Dorsolateral prefrontal cortex (tissue), 120 donors: ENCODE measurements at regions of chr6 and their contacts with region 1.

Region 1: DNA sequence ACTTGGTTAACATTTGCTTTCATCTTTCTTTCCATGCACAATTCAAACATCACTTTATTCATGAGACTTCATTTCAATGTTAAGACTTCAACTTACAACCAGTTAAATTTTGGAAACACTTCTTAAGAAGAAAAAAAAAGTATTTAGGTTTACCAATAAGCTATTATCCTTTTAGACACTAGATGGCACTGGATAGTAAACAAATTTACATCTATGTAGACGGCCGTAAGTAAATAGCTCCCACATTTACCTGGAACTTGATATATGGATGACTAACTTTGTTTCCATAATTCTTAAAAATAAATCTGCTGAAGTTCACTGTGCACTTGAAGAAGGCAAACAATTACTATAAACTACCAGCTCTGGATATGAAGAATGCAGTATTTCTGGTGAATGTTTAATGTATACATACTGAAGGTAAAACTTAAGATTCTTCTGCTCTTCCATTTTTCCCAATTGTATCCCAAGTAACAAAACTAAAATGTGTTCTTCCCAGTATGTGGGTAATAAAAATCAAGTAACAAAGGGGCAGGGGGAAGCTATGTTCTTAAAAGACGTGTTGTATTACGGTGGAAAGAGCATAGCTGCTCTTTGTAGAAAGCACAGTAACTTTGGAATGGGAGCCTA is 130.6 kb upstream of the C6orf118 start:
- DNase-seq: no peak
- H3K4me3 ChIP-seq: no peak overlapping the region
- H3K27ac ChIP-seq: no peak overlapping the region
- H3K27me3 ChIP-seq: no peaks in the 10 kb centered on the region
- CTCF ChIP-seq: peak; percentile 50 to 88 (median 70)

Region 2: GRCh38 chr6:165668951-165669350 is 228.9 kb after region 1 on chr6:
- intact Hi-C with region 1: no loop called
- DNase-seq: no peak
- H3K4me3 ChIP-seq: no peak overlapping the region
- H3K27ac ChIP-seq: no peak overlapping the region
- H3K27me3 ChIP-seq: peaks cover 0 to 59% (median 18%) of the 10 kb centered on the region in 45 donors
- CTCF ChIP-seq: no peak

Region 3: DNA sequence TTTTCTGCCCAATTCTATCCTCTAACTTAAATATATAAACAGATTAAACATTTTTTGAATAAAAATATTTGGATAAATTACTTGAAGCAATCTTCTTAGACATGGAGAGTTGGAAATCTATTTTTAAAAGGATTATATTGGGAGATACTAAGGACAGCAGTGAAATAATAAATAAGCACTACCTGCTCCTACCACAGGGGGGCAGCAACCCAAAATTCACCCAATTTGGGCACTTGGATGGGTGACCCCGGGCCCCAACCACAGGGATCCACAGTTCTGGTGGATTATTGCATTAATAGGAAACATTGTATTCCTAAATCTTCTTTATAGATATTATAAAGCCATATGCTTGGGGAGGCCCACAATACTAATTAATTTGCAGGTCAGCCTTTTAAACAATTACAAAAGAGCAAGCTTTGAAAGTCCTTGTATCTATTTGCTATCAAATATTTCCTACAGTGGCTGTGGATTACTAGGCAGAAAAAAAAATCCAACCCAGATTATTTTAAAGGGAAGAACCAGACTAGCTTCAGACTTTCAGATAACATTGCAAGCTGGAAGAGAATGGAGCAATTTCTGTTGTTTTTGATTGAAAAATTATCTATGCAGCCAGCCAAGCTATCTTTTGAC is 289.4 kb after region 1 on chr6:
- intact Hi-C with region 1: no loop called
- DNase-seq: no peak
- H3K4me3 ChIP-seq: no peak overlapping the region
- H3K27ac ChIP-seq: no peak overlapping the region
- H3K27me3 ChIP-seq: peaks cover 0 to 3% (median 0%) of the 10 kb centered on the region in 45 donors
- CTCF ChIP-seq: peak; percentile 53 to 85 (median 74)

Region 4: DNA sequence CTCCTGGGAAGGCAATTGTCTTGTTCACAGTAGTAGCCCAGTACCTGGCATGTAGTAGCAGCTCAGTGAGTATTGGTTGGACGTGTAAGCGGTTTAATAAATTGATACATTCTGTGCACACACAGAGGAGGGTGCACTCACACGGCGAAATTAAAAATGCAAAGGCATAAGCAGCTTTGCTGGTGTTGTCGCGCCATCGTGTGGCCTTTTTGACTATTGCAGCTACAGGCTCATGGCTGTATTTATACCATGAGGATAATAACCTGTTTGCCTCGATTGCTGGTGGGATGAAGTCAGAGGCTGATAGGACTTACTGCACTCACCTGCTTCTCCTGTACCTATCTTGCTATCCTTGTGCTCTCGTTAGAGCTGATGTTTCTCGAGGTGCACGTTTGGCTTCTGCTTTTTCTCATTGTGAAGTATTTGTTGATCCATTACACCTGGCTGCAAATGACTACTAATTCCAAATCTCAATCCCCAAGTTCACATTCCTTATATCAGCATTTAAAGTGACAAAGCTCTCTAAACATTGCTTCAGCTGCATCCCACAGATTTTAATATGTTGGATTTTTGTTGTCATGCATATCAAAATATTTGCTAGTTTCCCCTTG is 666.1 kb after region 1 on chr6:
- intact Hi-C with region 1: loop called in 1 of 2 experiments (anchors 10 kb)
- DNase-seq: peak; percentile 70 to 92 (median 80)
- H3K4me3 ChIP-seq: no peak overlapping the region
- H3K27ac ChIP-seq: no peak overlapping the region
- H3K27me3 ChIP-seq: peaks cover 0 to 5% (median 0%) of the 10 kb centered on the region in 45 donors
- CTCF ChIP-seq: peak; percentile 77 to 98 (median 94)